Mammary epithelial cell (primary cell): ENCODE measurements at regions of chr18 and their contacts with region 1.

Region 1: DNA sequence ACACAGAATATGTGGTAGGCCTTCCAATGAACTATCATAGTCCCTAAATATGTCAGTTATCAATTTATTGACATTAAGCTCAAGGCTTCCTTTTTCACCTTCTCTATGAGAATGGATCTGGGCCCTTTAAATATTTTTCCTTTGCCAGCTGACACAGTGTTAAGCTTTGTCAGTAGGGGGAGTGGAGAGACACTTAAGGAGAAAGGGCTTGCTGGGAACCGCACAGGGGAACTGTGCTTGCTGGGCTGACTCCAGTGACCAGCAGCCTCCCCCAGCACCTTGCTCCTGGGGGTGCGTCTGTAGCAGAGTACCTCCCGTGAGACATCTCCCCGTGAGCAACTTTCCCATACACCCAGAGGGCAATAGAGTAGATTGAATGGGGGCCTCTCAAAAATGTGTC is 6.5 kb upstream of the PTPN2 start:
- DNase-seq: no peak
- H3K4me3 ChIP-seq: no peak overlapping the region
- H3K27ac ChIP-seq: peak overlapping the region; percentile 7
- H3K4me1 ChIP-seq: no peaks in the 10 kb centered on the region
- H3K27me3 ChIP-seq: no peaks in the 10 kb centered on the region
- CTCF ChIP-seq: peak in 1 of 2 donors; percentile 2

Region 2: DNA sequence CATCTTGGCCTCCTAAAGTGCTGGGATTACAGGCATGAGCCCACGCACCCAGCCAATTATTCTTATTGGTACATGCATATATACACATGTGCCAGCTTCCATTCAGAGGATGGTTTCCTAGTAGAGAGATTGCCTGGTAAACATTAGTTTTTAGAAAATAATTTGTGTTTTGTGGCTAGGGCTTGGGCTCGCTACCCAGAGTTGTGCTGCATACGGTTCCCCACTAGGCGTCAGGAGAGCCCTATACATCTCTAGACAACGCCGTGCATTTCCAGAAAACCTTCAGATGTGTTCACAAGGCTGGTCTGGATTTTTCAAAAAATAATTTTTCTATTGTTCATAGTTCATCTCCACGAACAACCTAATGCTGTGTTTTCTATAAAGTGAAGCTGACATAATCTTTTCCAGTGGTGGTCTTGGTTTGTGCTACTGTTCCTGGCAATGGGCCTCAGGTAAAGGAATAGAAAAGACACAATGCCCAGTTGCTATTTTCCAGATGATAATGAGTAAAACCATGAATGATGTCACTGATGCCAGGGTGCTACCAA is 498.8 kb before region 1 on chr18:
- CTCF ChIA-PET with region 1: no interaction called
- dilution Hi-C with region 1: no loop called
- in situ Hi-C with region 1: no loop called
- intact Hi-C with region 1: loop called (anchors 5 kb)
- DNase-seq: peak; percentile 48
- H3K4me3 ChIP-seq: no peak overlapping the region
- H3K27ac ChIP-seq: no peak overlapping the region
- H3K4me1 ChIP-seq: no peaks in the 10 kb centered on the region
- H3K27me3 ChIP-seq: no peaks in the 10 kb centered on the region
- CTCF ChIP-seq: peak; percentile 97 to 99

Region 3: GRCh38 chr18:12726774-12727550 is 163.5 kb before region 1 on chr18:
- CTCF ChIA-PET with region 1: no interaction called
- dilution Hi-C with region 1: no loop called
- in situ Hi-C with region 1: no loop called
- intact Hi-C with region 1: loop called (anchors 1 kb)
- DNase-seq: peak; percentile 54
- H3K4me3 ChIP-seq: no peak overlapping the region
- H3K27ac ChIP-seq: no peak overlapping the region
- H3K4me1 ChIP-seq: peaks cover 5% of the 10 kb centered on the region
- H3K27me3 ChIP-seq: no peaks in the 10 kb centered on the region
- CTCF ChIP-seq: peak; percentile 83 to 91

Region 4: DNA sequence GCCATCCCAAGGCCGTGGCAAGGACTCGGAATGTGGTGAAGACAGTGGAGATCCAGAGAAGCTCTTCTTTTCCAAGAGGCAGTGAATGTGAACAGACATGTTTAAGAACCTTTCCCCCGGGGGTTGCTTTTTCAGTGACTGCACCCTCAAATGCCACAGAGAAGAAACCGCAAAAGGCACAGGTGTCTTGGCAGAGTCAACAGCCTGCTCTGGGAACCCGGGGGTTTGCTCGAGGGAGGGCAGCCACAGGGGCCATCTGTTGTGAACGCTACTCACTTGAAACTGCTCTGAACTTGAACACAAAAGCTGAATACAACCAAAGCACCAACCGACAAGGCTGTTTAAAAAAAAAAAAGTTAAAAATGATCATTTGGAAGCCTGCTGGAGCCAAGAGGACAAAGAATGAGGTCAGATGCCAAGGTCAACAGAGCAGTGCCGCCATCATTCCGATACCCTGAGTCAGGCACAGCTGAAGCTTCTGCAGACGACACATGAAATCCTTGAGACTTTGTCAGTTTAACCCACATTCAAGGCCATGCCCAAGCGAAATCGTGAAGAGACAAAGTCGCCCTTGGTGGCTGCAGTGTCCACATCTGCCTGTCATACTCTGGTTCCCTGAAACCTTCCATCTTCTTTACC is 140.3 kb before region 1 on chr18:
- CTCF ChIA-PET with region 1: interaction called, 8 read pairs
- dilution Hi-C with region 1: no loop called
- in situ Hi-C with region 1: loop called in 1 of 2 experiments (anchors 10 kb)
- intact Hi-C with region 1: no loop called
- DNase-seq: peak; percentile 26
- H3K4me3 ChIP-seq: no peak overlapping the region
- H3K27ac ChIP-seq: no peak overlapping the region
- H3K4me1 ChIP-seq: peaks cover 16% of the 10 kb centered on the region
- H3K27me3 ChIP-seq: no peaks in the 10 kb centered on the region
- CTCF ChIP-seq: no peak

Region 5: DNA sequence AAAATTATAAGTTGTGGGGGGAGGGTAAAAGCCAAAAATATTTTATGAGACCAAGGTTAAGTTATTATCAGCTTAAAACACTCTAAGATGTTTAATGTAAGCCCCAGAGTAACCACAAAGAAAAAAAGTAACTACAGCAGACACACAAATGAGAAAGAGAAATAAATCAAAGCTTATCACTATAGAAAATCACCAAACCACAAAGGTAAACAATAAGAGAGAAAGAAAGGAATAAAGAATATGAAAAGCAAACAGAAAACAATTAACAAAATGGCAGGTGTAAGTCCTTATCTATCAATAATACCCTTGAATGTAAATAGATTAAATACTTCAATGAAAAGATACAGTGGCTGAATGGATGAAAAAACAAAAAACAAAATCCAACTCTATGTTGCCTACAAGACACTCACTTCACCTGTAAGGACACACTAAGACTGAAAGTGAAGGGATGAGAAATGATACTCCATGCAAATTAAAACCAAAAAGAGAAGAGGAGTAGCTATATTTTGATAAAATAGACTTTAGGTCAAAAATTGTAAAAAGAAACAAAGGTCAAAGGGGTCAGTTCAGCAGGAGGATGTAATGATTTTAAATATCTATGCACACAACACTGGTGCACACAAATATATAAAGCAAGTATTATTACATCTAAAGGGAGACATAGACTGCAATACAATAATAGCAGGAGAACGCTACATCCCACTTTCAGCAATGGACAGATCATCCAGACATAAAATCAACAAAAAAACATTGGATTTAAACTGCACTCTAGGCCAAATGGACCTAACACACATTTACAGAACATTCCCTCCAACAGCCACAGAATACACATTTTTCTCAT is 87.2 kb before region 1 on chr18:
- CTCF ChIA-PET with region 1: no interaction called
- dilution Hi-C with region 1: loop called (anchors 5 kb)
- in situ Hi-C with region 1: no loop called
- intact Hi-C with region 1: no loop called
- DNase-seq: no peak
- H3K4me3 ChIP-seq: no peak overlapping the region
- H3K27ac ChIP-seq: no peak overlapping the region
- H3K4me1 ChIP-seq: no peaks in the 10 kb centered on the region
- H3K27me3 ChIP-seq: no peaks in the 10 kb centered on the region
- CTCF ChIP-seq: no peak

Region 6: DNA sequence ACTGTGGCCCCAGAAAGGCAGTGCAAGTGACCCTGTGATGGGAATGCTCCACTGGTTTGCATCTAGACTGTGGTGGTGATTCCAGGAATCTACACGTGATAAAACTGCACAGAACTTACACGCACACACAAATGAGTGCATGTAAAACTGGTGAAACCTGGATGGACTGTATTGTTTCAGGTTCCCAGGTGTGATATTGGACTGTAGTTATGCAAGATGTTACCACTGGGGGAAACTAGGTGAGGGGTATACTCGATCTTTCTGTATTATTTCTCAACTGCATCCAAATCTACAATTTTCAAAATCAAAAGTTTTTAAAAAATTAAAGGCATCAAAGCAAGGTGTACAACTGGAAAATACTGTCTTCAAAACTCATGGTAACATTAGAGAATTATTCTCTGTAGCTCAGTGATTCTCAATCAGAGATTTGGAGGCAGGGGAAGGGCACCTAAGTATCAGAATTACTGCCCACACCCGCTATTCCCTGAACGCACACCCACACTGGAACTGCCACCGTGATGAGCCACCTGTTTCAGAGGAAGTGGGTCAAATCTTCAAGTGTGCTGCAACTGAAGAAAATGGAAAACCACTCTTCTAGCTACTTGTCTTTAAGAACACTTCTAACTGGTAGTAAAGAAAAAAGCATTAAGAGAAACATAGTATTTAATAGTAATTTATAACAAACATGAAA is 33.1 kb before region 1 on chr18:
- CTCF ChIA-PET with region 1: interaction called, 3 read pairs
- dilution Hi-C with region 1: loop called (anchors 5 kb)
- in situ Hi-C with region 1: no loop called
- intact Hi-C with region 1: no loop called
- DNase-seq: no peak
- H3K4me3 ChIP-seq: no peak overlapping the region
- H3K27ac ChIP-seq: no peak overlapping the region
- H3K4me1 ChIP-seq: peaks cover 12% of the 10 kb centered on the region
- H3K27me3 ChIP-seq: no peaks in the 10 kb centered on the region
- CTCF ChIP-seq: no peak

Region 7: DNA sequence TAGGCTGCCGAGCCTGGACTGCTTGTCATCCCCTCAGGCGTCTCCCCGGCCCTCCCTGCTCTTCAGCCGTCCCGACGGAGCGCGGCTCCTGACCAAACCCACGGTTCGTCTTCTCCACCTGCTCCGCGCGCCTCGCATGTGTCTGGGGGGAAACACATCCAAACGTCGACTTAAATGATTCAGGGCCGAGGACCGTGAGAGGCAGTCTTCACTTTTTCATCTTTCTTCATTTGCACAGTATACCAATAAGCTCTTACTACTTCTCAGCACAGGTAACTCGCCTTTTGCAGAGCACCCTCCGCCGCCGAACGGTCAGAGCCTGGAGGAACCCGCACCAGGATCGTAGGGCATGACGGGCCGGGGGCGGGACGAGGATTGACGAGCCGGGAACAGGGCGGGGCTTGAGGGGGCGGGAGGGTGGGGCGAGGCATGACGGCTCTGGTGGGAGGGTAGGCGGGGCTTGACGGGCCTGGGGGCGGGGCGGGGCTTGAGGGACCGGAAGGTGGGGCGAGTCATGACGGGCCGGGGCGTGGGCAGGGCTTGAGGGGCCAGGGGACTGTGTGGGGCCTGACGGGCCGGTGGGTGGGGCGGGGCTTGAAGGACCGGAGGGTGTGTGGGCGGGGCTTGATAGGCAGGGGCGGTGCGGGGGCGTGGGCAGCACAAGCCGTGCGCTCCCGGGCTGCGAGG is 57.0 kb after region 1 on chr18 and contains the start of gene SEH1L:
- CTCF ChIA-PET with region 1: no interaction called
- dilution Hi-C with region 1: no loop called
- in situ Hi-C with region 1: no loop called
- intact Hi-C with region 1: no loop called
- DNase-seq: peak; percentile 94
- H3K4me3 ChIP-seq: peak within 1 kb of the TSS; percentile 90 to 99 (median 93)
- H3K27ac ChIP-seq: peak within 1 kb of the TSS; percentile 96
- H3K4me1 ChIP-seq: peaks cover 7% of the 10 kb centered on the region
- H3K27me3 ChIP-seq: no peaks in the 10 kb centered on the region
- CTCF ChIP-seq: no peak
- total RNA-seq, gene SEH1L: 41.0 to 67.8 TPM